Heart right ventricle (tissue), 16 donors: ENCODE measurements at regions of chr14 and their contacts with region 1.

Region 1: GRCh38 chr14:21057803-21058675 is at the start of gene RNASE8:
- DNase-seq: no peak
- ATAC-seq: peak in 1 of 8 donors; percentile 43
- H3K4me3 ChIP-seq: no peak within 1 kb of the TSS
- H3K27ac ChIP-seq: no peak within 1 kb of the TSS
- H3K4me1 ChIP-seq: peaks cover 0 to 10% (median 2%) of the 10 kb centered on the region in 9 donors
- H3K27me3 ChIP-seq: no peaks in the 10 kb centered on the region
- CTCF ChIP-seq: peak in 2 of 9 donors; percentile 9 to 14
- total RNA-seq, gene RNASE8: not detected

Region 2: GRCh38 chr14:20539906-20540305 is 518.1 kb before region 1 on chr14:
- intact Hi-C with region 1: loop called in 1 of 10 experiments (anchors 10 kb)
- DNase-seq: no peak
- ATAC-seq: no peak
- H3K4me3 ChIP-seq: no peak overlapping the region
- H3K27ac ChIP-seq: no peak overlapping the region
- H3K4me1 ChIP-seq: no peaks in the 10 kb centered on the region
- H3K27me3 ChIP-seq: no peaks in the 10 kb centered on the region
- CTCF ChIP-seq: no peak

Region 3: DNA sequence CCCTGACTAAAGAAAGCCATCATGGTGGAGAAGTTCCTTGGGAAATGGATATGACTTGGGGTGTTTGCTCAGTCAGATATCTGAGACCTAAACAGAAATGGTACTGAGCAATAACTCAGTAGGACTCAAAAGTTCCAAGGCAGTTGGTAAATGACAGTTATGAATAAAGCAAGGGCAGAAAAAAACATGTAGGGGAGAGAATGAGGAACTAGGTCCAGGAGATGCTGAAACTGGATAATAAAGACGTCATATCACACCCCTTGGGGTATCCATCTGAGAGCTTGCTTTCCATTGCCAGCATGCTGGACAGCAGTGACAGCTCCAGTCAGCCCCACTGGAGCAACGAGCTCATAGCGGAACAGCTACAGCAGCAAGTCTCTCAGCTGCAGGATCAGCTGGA is 259.4 kb after region 1 on chr14:
- intact Hi-C with region 1: no loop called
- DNase-seq: no peak
- ATAC-seq: no peak
- H3K4me3 ChIP-seq: no peak overlapping the region
- H3K27ac ChIP-seq: no peak overlapping the region
- H3K4me1 ChIP-seq: peaks cover 0 to 30% (median 0%) of the 10 kb centered on the region in 9 donors
- H3K27me3 ChIP-seq: peaks cover 0 to 5% (median 0%) of the 10 kb centered on the region in 7 donors
- CTCF ChIP-seq: no peak